ENCODE measurements at regions of chr6 and their contacts with region 1.

Region 1: GRCh38 chr6:128520436-128521281 is at the start of gene PTPRK:
- DNase-seq: peak; percentile 93 to 95
- H3K4me3 ChIP-seq: peak within 1 kb of the TSS; percentile 84
- H3K4me3 Mint-ChIP-seq: peak within 1 kb of the TSS; percentile 92
- H3K27ac Mint-ChIP-seq: peak within 1 kb of the TSS; percentile 99
- H3K4me1 ChIP-seq: peaks cover 9% of the 10 kb centered on the region
- H3K4me1 Mint-ChIP-seq: peaks cover 20% of the 10 kb centered on the region
- H3K27me3 ChIP-seq: no peaks in the 10 kb centered on the region
- H3K27me3 Mint-ChIP-seq: no peaks in the 10 kb centered on the region
- CTCF ChIP-seq: peak; percentile 12 to 46
- total RNA-seq, gene PTPRK: 94.4 and 97.3 TPM in 2 replicates

Region 2: GRCh38 chr6:127855542-127856159 is 665.0 kb before region 1 on chr6:
- CTCF ChIA-PET with region 1: interaction called, 3 read pairs
- POLR2A ChIA-PET with region 1: no interaction called
- intact Hi-C with region 1: loop called (anchors 2 kb)
- DNase-seq: peak in 1 of 2 experiments; percentile 36
- H3K4me3 ChIP-seq: no peak overlapping the region
- H3K4me3 Mint-ChIP-seq: no peak overlapping the region
- H3K27ac Mint-ChIP-seq: no peak overlapping the region
- H3K4me1 ChIP-seq: no peaks in the 10 kb centered on the region
- H3K4me1 Mint-ChIP-seq: no peaks in the 10 kb centered on the region
- H3K27me3 ChIP-seq: no peaks in the 10 kb centered on the region
- H3K27me3 Mint-ChIP-seq: no peaks in the 10 kb centered on the region
- CTCF ChIP-seq: peak; percentile 42 to 62

Region 3: DNA sequence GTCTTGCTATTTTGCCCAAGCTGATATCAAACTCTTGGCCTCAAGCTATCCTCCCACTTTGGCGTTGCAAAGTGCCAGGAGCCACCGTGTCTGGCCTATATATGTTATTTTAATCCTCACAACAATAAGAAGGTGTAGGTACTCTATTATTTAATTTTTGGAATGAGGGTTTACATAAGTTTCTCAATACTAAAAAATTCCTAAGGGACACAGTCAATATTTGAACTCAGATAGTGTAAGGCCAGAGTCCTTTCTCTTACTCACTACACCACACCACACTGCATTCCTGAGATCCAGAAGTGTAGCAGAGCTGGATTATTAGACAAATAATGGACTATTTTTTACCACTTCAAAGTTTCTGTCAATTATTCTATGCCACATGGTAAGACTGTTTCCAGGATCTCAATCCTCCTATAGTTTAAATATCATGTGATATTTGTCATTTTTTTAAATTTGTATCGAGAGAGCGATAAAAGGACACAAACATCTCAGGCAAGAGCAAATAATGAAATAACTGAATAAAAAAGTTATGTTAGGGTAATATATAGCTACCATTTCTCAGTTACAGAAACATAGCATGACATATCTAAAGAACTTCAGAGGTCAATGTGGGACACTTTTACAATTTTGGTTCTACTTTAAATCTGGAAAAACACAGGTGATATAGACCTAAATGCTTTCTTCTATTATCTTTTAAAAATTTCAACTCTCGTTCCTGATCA is 457.6 kb before region 1 on chr6:
- CTCF ChIA-PET with region 1: no interaction called
- POLR2A ChIA-PET with region 1: interaction called, 10 read pairs
- intact Hi-C with region 1: loop called (anchors 2 kb)
- DNase-seq: peak; percentile 63 to 67
- H3K4me3 ChIP-seq: no peak overlapping the region
- H3K4me3 Mint-ChIP-seq: peak overlapping the region; percentile 43
- H3K27ac Mint-ChIP-seq: peak overlapping the region; percentile 89
- H3K4me1 ChIP-seq: peaks cover 35% of the 10 kb centered on the region
- H3K4me1 Mint-ChIP-seq: peaks cover 7% of the 10 kb centered on the region
- H3K27me3 ChIP-seq: no peaks in the 10 kb centered on the region
- H3K27me3 Mint-ChIP-seq: no peaks in the 10 kb centered on the region
- CTCF ChIP-seq: no peak

Region 4: GRCh38 chr6:128339635-128340450 is 180.8 kb before region 1 on chr6:
- CTCF ChIA-PET with region 1: interaction called, 3 read pairs
- POLR2A ChIA-PET with region 1: interaction called, 5 read pairs
- intact Hi-C with region 1: loop called (anchors 5 kb)
- DNase-seq: peak in 1 of 2 experiments; percentile 15
- H3K4me3 ChIP-seq: no peak overlapping the region
- H3K4me3 Mint-ChIP-seq: no peak overlapping the region
- H3K27ac Mint-ChIP-seq: peak overlapping the region; percentile 32
- H3K4me1 ChIP-seq: peaks cover 31% of the 10 kb centered on the region
- H3K4me1 Mint-ChIP-seq: peaks cover 31% of the 10 kb centered on the region
- H3K27me3 ChIP-seq: no peaks in the 10 kb centered on the region
- H3K27me3 Mint-ChIP-seq: no peaks in the 10 kb centered on the region
- CTCF ChIP-seq: no peak

Region 5: DNA sequence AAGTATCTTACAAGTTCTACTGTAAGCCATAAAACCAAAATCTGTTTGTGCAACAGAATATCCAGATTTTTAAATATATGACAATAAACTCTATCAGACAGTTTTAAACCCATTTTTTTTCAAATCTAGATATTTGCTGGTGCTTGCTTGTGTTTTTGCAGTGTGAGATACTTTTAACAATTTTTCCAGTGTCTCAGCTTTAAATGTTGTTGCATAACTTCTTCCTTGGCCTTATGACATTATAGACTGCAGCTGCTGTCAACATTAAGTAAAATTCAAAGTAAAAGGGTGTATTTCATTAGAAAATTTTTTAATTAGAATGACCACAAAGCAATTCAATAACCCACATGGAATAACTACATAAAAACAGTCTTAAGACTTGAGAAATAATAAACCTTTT is 139.8 kb before region 1 on chr6:
- CTCF ChIA-PET with region 1: no interaction called
- POLR2A ChIA-PET with region 1: no interaction called
- intact Hi-C with region 1: loop called (anchors 5 kb)
- DNase-seq: no peak
- H3K4me3 ChIP-seq: no peak overlapping the region
- H3K4me3 Mint-ChIP-seq: no peak overlapping the region
- H3K27ac Mint-ChIP-seq: no peak overlapping the region
- H3K4me1 ChIP-seq: no peaks in the 10 kb centered on the region
- H3K4me1 Mint-ChIP-seq: no peaks in the 10 kb centered on the region
- H3K27me3 ChIP-seq: no peaks in the 10 kb centered on the region
- H3K27me3 Mint-ChIP-seq: no peaks in the 10 kb centered on the region
- CTCF ChIP-seq: no peak

Region 6: DNA sequence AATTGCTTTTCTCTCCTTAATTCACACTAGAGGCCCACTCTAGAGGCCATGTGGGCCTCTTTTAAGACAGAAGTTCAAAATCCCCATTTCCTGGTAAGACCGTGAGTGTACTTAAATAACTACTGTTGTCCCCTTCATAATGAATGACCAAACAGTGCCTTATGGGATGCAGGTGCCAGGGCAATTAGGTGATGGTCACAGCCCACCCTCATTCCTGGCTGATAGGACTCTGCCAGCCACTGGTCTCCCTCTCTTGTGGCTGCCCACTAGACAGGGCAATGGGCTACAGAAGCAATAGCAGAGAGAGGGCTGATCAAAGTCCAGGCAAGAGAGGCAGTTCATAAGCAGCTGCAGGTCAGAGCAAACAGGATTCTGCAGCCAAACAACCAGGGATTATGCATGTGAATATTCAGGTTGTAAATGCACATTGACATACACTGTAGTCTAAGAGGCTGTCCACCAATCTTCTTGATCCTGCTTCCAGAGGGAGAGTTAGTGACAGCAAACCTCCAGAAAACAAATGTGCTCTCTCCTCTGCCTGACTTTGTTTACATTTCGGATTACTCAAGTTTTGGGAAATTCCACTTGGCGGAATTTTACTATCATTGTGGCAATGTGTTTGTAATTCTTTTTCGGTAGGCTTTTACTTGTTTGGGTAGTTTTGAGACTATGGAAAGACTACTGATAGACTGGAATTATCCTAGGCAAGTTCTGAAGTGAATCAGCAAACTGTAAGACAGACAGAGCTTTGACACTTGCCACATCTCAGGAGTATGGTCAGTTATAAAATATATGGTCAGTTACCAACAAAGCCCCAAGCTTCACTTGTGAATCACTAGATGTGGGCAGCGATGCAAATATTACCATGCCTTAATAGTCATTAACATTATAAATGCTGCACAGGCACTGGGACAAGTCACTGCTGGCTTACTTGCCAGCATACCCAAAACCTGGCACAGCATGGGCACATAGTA is 13.0 kb before region 1 on chr6:
- CTCF ChIA-PET with region 1: interaction called, 5 read pairs
- POLR2A ChIA-PET with region 1: interaction called, 12 read pairs
- intact Hi-C with region 1: loop called (anchors 1 kb)
- DNase-seq: peak; percentile 71 to 73
- H3K4me3 ChIP-seq: no peak overlapping the region
- H3K4me3 Mint-ChIP-seq: peak overlapping the region; percentile 50
- H3K27ac Mint-ChIP-seq: peak overlapping the region; percentile 69
- H3K4me1 ChIP-seq: peaks cover 83% of the 10 kb centered on the region
- H3K4me1 Mint-ChIP-seq: peaks cover 25% of the 10 kb centered on the region
- H3K27me3 ChIP-seq: no peaks in the 10 kb centered on the region
- H3K27me3 Mint-ChIP-seq: no peaks in the 10 kb centered on the region
- CTCF ChIP-seq: no peak

Region 7: DNA sequence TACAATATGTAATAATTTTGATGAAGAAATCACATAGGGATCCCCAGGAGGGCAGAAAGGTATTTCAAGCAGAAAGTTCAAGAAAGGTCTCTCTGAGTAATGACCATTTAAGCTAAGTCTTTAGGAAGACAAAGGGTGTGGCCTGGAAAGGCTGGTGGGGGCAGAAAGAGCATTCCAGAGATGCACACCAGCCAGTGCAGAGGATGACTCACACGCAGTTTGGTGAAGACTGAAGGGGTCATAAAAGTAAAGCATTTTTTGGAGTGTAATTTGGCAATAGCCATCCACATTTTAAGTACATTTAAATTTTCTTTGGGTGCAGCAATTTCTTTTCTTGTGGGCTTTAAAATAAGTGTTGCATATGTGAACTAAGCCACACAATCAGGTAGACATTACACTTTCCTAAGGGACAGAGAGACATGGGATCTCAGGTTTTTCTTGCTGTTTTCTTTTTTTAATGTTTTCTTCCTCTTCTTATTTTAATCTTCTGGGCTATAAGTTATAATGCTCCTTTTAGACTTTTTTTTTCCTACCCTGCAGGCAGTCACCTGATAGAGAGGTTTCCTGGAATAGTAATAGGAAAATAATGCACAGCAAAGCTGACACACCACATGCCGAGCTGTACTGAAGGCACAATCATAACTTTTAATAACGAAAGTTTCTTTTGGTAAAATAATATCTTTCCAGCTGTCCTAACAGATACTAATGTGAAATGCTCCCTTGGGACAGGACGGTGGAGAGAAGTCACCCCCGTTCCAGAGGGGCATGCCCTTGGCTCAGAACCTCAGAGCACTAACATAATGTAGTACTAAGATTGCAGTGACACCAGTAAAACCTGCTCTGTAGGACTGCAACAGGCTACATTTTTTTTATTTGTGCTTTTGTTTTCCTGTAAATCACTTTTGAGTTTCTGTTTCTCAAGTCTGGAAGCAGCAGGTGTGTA is 49.3 kb after region 1 on chr6:
- CTCF ChIA-PET with region 1: no interaction called
- POLR2A ChIA-PET with region 1: no interaction called
- intact Hi-C with region 1: loop called (anchors 5 kb)
- DNase-seq: peak; percentile 30 to 47
- H3K4me3 ChIP-seq: no peak overlapping the region
- H3K4me3 Mint-ChIP-seq: no peak overlapping the region
- H3K27ac Mint-ChIP-seq: no peak overlapping the region
- H3K4me1 ChIP-seq: peaks cover 19% of the 10 kb centered on the region; the same call in 1 of the 2 replicates
- H3K4me1 Mint-ChIP-seq: peaks cover 12% of the 10 kb centered on the region
- H3K27me3 ChIP-seq: no peaks in the 10 kb centered on the region
- H3K27me3 Mint-ChIP-seq: no peaks in the 10 kb centered on the region
- CTCF ChIP-seq: no peak

Region 8: GRCh38 chr6:128713461-128713860 is 192.8 kb after region 1 on chr6:
- CTCF ChIA-PET with region 1: no interaction called
- POLR2A ChIA-PET with region 1: no interaction called
- intact Hi-C with region 1: no loop called
- DNase-seq: no peak
- H3K4me3 ChIP-seq: no peak overlapping the region
- H3K4me3 Mint-ChIP-seq: no peak overlapping the region
- H3K27ac Mint-ChIP-seq: no peak overlapping the region
- H3K4me1 ChIP-seq: no peaks in the 10 kb centered on the region
- H3K4me1 Mint-ChIP-seq: no peaks in the 10 kb centered on the region
- H3K27me3 ChIP-seq: peaks cover 1% of the 10 kb centered on the region; the same call in 1 of the 2 replicates
- H3K27me3 Mint-ChIP-seq: peaks cover 23% of the 10 kb centered on the region
- CTCF ChIP-seq: no peak

Measured in Caco-2 (cell line).